Psoas muscle (tissue), 8 donors: ENCODE measurements at regions of chrX and their contacts with region 1.

Region 1: GRCh38 chrX:135497736-135498135 is 22.7 kb upstream of the INTS6L start:
- DNase-seq: no peak
- ATAC-seq: no peak
- H3K4me3 ChIP-seq: no peak overlapping the region
- H3K27ac ChIP-seq: no peak overlapping the region
- H3K4me1 ChIP-seq: no peaks in the 10 kb centered on the region
- H3K27me3 ChIP-seq: peaks cover 0 to 10% (median 0%) of the 10 kb centered on the region in 3 donors
- CTCF ChIP-seq: no peak

Region 2: DNA sequence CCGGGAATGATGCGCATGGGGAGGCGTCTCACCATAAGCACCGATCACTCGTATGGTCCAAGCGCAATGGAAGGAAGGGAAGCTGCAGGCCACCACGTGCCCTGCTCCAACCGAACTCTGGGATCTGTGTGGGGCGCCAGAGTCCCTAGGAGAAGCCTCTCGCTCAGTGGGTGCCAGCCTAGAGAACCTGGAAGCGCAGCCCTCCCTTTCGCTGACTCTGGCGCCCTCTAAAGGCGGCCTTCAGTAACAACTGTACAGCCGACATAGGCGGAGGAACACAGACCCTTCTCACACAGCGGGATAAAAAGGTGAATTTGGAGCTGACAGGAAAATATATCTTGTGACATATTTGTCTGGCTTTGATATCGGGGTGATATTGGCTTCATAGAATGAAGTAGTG is 98.8 kb after region 1 on chrX:
- intact Hi-C with region 1: loop called in 1 of 2 experiments (anchors 10 kb)
- DNase-seq: peak in 1 of 2 donors; percentile 12
- ATAC-seq: no peak
- H3K4me3 ChIP-seq: no peak overlapping the region
- H3K27ac ChIP-seq: no peak overlapping the region
- H3K4me1 ChIP-seq: no peaks in the 10 kb centered on the region
- H3K27me3 ChIP-seq: no peaks in the 10 kb centered on the region
- CTCF ChIP-seq: peak; percentile 19

Region 3: DNA sequence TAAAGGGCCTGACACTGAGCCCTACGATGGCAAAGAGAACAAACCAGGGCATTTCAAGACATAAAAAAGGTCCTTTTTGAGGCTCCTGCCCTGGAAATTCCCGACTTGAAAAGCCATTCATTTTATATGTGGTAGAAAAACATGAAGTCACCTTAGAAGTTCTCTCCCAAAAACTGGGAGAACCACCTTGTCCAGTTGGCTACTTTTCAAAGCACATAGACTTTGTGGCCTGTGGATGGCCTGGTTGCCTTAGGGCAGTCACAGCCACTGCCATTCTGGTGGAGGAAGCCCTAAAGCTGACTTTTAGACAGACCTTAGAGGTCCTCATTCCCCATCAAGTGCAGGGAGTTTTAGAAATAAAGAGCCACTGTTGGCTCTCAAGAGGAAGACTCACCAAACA is 155.5 kb after region 1 on chrX:
- intact Hi-C with region 1: no loop called
- DNase-seq: no peak
- ATAC-seq: no peak
- H3K4me3 ChIP-seq: no peak overlapping the region
- H3K27ac ChIP-seq: no peak overlapping the region
- H3K4me1 ChIP-seq: no peaks in the 10 kb centered on the region
- H3K27me3 ChIP-seq: peaks cover 0 to 12% (median 0%) of the 10 kb centered on the region in 3 donors
- CTCF ChIP-seq: no peak